ENCODE measurements at regions of chr7 and their contacts with region 1.

Region 1: DNA sequence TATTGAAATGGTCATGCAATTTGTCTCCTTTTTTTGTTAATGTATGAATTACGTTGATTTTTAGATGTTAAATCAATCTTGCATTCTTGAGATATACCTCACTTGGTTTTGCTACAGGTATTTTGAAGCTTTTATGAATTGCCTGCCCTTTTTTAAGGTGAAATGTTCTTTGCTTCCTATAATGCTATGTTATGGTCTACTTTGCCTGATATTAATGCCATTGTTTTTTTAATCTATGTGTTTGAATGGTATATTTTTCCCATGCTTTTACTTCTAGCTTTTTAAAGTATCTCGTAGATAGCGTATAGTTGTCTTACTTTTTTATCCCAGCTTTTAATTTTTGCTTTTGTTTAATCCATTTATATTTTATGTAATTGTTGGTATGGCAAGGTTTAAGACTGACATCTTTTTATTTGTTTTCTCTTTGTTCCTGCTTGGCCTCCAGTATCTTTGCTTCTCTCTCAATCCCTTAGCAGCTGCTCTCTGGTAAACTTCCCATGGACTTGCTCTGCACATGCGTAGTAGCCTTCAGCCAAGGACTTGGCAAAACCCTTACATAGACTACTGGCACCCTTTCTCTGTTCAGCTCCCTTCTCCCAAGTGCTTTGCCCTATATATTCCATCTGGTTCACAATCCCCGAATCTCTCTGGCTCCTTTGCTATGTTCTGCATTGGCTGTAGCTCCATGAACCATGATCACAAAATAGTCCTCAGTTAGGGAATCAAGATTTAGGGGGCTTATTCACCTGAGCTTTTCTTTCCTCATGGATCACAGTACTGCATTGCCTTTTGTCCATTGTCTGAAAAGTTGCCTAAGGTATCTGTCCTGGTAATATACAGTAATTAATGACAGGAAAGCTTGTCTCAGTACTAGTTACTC is 8.4 kb downstream of the TRIM24 start:
- DNase-seq: no peak
- ATAC-seq: no peak
- H3K4me3 ChIP-seq: no peak overlapping the region
- H3K27ac ChIP-seq: no peak overlapping the region
- H3K4me1 ChIP-seq: peaks cover 5 to 11% of the 10 kb centered on the region in 2 experiments; a peak in 4 of 5 replicates
- H3K27me3 ChIP-seq: no peaks in the 10 kb centered on the region
- CTCF ChIP-seq: no peak
- EP300 ChIP-seq: no peak
- POLR2A ChIP-seq: no peak
- RAD21 ChIP-seq: no peak

Region 2: GRCh38 chr7:138115047-138115446 is 353.4 kb before region 1 on chr7:
- CTCF ChIA-PET with region 1: no interaction called
- POLR2A ChIA-PET with region 1: no interaction called
- in situ Hi-C with region 1: no loop called
- intact Hi-C with region 1: no loop called
- DNase-seq: no peak
- ATAC-seq: no peak
- H3K4me3 ChIP-seq: no peak overlapping the region
- H3K27ac ChIP-seq: no peak overlapping the region
- H3K4me1 ChIP-seq: no peaks in the 10 kb centered on the region; a peak in 1 of 5 replicates
- H3K27me3 ChIP-seq: peaks cover 12 to 16% of the 10 kb centered on the region in 2 experiments
- CTCF ChIP-seq: no peak
- EP300 ChIP-seq: no peak
- POLR2A ChIP-seq: no peak
- RAD21 ChIP-seq: no peak

Region 3: DNA sequence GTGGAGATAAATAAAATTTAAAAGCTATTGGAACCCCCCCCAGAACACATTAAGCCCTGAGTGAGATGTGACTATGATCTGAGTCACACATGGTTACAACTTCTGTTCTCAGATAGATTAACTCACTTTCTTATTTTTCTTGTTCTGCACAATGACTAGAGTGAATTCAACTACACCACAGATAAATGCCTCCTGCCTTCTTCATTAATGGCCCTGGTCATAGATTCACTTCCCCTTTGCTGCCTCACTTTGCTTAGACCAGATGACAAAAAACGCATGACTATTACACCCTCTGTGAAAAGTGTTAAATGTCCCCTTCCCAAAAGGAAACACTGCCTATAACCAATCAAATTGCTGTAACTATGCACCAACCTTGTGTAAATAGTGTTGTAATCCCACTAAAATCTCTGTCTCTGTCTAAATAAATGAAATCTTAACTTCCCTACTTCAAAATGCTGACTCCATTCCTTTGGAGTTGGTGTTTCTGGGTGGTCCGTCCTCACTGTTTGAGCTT is 342.8 kb before region 1 on chr7:
- CTCF ChIA-PET with region 1: no interaction called
- POLR2A ChIA-PET with region 1: no interaction called
- in situ Hi-C with region 1: no loop called
- intact Hi-C with region 1: no loop called
- DNase-seq: no peak
- ATAC-seq: no peak; the same call in 2 of the 3 replicates
- H3K4me3 ChIP-seq: no peak overlapping the region
- H3K27ac ChIP-seq: no peak overlapping the region
- H3K4me1 ChIP-seq: peaks cover 0 to 5% of the 10 kb centered on the region in 2 experiments; a peak in 1 of 5 replicates
- H3K27me3 ChIP-seq: peaks cover 21 to 46% of the 10 kb centered on the region in 2 experiments; a peak in 4 of 5 replicates
- CTCF ChIP-seq: no peak
- EP300 ChIP-seq: no peak
- POLR2A ChIP-seq: no peak
- RAD21 ChIP-seq: no peak

Region 4: DNA sequence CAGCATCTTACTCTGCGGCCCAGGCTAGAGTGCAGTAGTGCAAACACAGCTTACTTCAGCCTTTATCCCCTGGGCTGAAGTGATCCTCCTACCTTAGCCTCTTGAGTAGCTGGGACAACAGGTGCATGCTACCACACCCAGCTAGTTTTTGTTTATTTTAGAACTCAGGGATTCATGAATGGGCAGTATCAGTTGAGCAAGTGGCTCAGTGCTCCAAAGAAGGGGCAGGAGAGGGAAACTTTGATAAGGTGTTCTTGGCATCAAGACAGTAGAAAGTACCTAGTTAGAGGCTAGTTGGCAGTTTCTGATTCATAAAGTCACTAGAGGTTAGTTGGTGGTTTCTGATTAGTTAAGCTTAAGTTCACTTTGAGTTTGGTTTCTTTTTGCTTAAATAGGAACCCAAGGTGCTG is 10.0 kb after region 1 on chr7:
- CTCF ChIA-PET with region 1: no interaction called
- POLR2A ChIA-PET with region 1: interaction called, 24 read pairs
- in situ Hi-C with region 1: no loop called
- intact Hi-C with region 1: no loop called
- DNase-seq: no peak
- ATAC-seq: peak; percentile 43
- H3K4me3 ChIP-seq: no peak overlapping the region
- H3K27ac ChIP-seq: no peak overlapping the region; the same call in 2 of the 3 replicates
- H3K4me1 ChIP-seq: peaks cover 3 to 12% of the 10 kb centered on the region in 2 experiments; a peak in 3 of 5 replicates
- H3K27me3 ChIP-seq: no peaks in the 10 kb centered on the region
- CTCF ChIP-seq: no peak
- EP300 ChIP-seq: no peak
- POLR2A ChIP-seq: no peak
- RAD21 ChIP-seq: no peak

Region 5: GRCh38 chr7:138483531-138483930 is 15.0 kb after region 1 on chr7:
- CTCF ChIA-PET with region 1: no interaction called
- POLR2A ChIA-PET with region 1: interaction called, 24 read pairs
- in situ Hi-C with region 1: no loop called
- intact Hi-C with region 1: no loop called
- DNase-seq: no peak
- ATAC-seq: peak; percentile 65
- H3K4me3 ChIP-seq: no peak overlapping the region
- H3K27ac ChIP-seq: peak overlapping the region; percentile 37; the same call in 1 of the 3 replicates
- H3K4me1 ChIP-seq: peaks cover 3 to 12% of the 10 kb centered on the region in 2 experiments; a peak in 3 of 5 replicates
- H3K27me3 ChIP-seq: no peaks in the 10 kb centered on the region
- CTCF ChIP-seq: no peak
- EP300 ChIP-seq: no peak
- POLR2A ChIP-seq: no peak
- RAD21 ChIP-seq: no peak

Region 6: GRCh38 chr7:138903186-138903820 is 434.8 kb after region 1 on chr7:
- CTCF ChIA-PET with region 1: no interaction called
- POLR2A ChIA-PET with region 1: no interaction called
- in situ Hi-C with region 1: no loop called
- intact Hi-C with region 1: no loop called
- DNase-seq: no peak
- ATAC-seq: no peak
- H3K4me3 ChIP-seq: no peak overlapping the region
- H3K27ac ChIP-seq: no peak overlapping the region
- H3K4me1 ChIP-seq: no peaks in the 10 kb centered on the region
- H3K27me3 ChIP-seq: peaks cover 64 to 76% of the 10 kb centered on the region in 2 experiments
- CTCF ChIP-seq: no peak
- EP300 ChIP-seq: no peak
- POLR2A ChIP-seq: no peak
- RAD21 ChIP-seq: no peak

Measured in K562 (cell line).